Ovary (tissue), 10 donors: ENCODE measurements at regions of chr12 and their contacts with region 1.

Region 1: DNA sequence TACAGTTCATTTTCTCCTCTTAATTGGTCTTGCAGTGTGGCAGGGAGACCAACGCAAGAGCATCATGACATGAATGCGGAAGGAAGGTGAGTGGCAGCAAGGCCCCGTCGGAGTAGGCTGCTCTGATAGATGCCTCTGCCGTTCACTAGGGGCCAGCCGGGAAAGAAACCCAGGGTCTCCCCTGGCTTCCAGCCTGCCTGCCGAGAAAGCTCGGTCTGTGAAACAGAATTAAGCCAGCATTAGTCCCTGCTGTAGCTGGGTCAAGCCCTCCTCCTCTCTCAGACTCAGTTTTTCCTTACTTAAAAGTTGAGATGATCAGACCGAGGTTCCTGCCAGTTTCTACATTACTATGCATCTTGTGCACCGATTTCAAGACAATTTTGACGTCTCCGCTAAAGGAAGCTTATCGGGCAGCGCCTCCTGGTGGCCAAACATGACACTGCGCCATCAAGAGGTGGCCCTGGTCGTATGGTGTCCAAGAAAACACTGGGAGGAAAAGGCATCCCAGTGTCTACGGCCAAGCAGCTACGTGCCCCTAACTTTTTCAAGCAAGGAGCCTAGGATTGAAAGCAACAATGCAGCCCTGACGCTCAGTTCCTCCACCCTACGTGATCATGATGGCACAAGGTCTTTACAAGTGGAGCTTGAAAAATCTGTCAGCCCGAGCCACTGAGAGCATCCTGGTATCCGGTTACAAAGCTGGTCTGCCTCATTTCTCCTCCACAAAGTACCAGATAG is 131.6 kb downstream of the KSR2 start:
- DNase-seq: peak; percentile 40 to 85 (median 74)
- H3K4me3 ChIP-seq: no peak overlapping the region
- H3K27ac ChIP-seq: no peak overlapping the region
- H3K4me1 ChIP-seq: no peaks in the 10 kb centered on the region
- H3K27me3 ChIP-seq: no peaks in the 10 kb centered on the region
- CTCF ChIP-seq: peak; percentile 51 to 69 (median 58)
- EP300 ChIP-seq: no peak
- POLR2A ChIP-seq: no peak

Region 2: GRCh38 chr12:117025481-117026151 is 811.6 kb before region 1 on chr12:
- intact Hi-C with region 1: loop called in 1 of 4 experiments (anchors 5 kb)
- DNase-seq: peak; percentile 71 to 86 (median 77)
- H3K4me3 ChIP-seq: no peak overlapping the region
- H3K27ac ChIP-seq: peak overlapping the region in 1 of 2 donors; percentile 56
- H3K4me1 ChIP-seq: peaks cover 3% of the 10 kb centered on the region
- H3K27me3 ChIP-seq: no peaks in the 10 kb centered on the region
- CTCF ChIP-seq: peak; percentile 80 to 84 (median 83)
- EP300 ChIP-seq: no peak
- POLR2A ChIP-seq: no peak

Region 3: GRCh38 chr12:117212563-117213190 is 624.5 kb before region 1 on chr12:
- intact Hi-C with region 1: loop called (anchors 5 kb)
- DNase-seq: peak; percentile 70 to 84 (median 81)
- H3K4me3 ChIP-seq: no peak overlapping the region
- H3K27ac ChIP-seq: no peak overlapping the region
- H3K4me1 ChIP-seq: no peaks in the 10 kb centered on the region
- H3K27me3 ChIP-seq: no peaks in the 10 kb centered on the region
- CTCF ChIP-seq: peak; percentile 67 to 76 (median 71)
- EP300 ChIP-seq: no peak
- POLR2A ChIP-seq: no peak

Region 4: DNA sequence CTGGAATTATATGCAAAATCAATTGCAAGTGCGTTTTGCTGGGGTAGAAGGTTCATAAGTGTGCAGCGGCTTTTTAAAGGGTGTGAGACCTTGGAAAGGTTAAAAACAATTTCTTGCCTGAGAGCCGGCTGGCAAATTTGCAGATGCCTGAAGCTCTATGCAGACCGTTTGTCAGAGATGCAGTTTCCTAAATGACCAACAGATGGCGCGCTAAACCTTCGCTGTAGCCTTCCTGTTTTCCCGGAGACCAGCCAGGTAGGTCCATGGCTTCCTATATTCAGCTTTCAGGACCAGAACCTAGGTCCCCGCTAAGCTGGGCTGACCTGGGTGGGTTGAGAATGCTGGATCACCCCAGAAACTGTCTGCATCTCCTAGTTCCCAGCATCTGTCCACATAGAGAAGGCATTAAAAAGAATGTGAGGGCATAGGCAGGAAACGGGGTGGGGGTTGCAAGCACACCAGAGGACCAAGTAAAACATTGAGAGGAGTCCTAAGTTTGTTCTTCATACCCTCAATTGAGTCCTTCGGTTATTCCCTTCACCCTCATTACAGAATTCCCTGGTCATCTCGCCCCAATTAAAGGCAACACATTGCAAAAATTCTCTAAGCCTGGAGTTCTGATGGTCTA is 470.0 kb before region 1 on chr12:
- intact Hi-C with region 1: loop called in 1 of 4 experiments (anchors 10 kb)
- DNase-seq: peak in 2 of 5 donors; percentile 17 to 20
- H3K4me3 ChIP-seq: no peak overlapping the region
- H3K27ac ChIP-seq: no peak overlapping the region
- H3K4me1 ChIP-seq: no peaks in the 10 kb centered on the region
- H3K27me3 ChIP-seq: no peaks in the 10 kb centered on the region
- CTCF ChIP-seq: no peak
- EP300 ChIP-seq: no peak
- POLR2A ChIP-seq: no peak

Region 5: GRCh38 chr12:117447665-117448366 is 389.4 kb before region 1 on chr12:
- intact Hi-C with region 1: no loop called
- DNase-seq: no peak
- H3K4me3 ChIP-seq: no peak overlapping the region
- H3K27ac ChIP-seq: no peak overlapping the region
- H3K4me1 ChIP-seq: no peaks in the 10 kb centered on the region
- H3K27me3 ChIP-seq: no peaks in the 10 kb centered on the region
- CTCF ChIP-seq: no peak
- EP300 ChIP-seq: no peak
- POLR2A ChIP-seq: no peak